Right lobe of liver (tissue), 6 donors: ENCODE measurements at regions of chr12 and their contacts with region 1.

Region 1: DNA sequence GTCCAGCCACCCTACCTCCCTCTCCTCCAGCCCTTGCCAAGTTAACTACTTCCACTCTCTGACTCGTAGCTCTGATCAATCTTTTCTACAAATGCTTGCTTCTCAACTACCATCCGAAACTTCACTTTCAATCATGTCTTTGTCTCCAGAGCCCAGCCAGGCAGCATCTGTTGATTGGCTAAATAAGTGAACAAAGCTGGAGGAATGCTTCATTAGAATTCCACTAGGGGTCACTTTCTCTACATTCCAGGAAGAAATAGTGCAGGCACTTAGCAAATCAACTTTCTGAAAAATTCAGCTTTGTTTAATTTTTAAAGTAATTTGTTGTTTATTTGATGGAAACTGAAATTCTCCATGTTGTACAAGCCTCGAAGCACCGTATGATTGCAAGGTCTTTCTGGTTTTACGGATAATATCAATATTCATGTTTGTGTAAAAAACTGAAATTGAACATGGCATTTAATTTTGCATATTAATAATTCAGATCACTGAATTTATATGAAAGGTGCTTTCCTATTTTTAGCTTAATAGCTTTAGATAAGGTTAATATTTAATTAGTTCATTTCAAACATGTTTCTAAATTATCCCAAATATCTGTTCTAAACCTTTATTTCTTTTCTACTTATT is 32.4 kb upstream of the HELB start:
- DNase-seq: no peak
- ATAC-seq: peak; percentile 70 to 85 (median 82)
- H3K4me3 ChIP-seq: no peak overlapping the region
- H3K27ac ChIP-seq: no peak overlapping the region
- H3K4me1 ChIP-seq: no peaks in the 10 kb centered on the region
- H3K27me3 ChIP-seq: no peaks in the 10 kb centered on the region
- CTCF ChIP-seq: peak; percentile 65 to 70 (median 68)
- POLR2A ChIP-seq: no peak

Region 2: DNA sequence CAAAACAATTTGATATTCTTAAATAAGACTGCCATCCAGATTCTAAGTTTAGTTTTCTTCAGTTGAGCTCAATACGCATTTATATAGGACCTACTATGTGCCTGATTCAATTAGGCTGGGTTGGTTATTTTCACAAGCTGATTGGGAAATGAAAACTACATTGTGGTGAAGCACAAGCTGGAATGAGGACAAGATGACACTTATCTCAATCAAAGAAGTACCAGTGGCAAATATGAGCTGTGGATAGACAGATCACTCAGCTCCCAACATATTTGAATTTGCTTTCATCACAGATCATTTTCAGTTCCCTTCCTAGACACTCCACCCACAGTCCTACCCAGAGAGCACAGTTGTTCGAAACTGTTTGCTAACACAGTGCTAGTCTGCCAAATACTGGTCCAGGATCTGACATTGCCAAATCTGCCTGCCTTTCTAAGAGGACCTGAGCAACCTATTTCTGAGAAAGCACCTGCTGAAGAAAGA is 214.0 kb before region 1 on chr12:
- intact Hi-C with region 1: no loop called
- DNase-seq: peak in 1 of 3 donors; percentile 55
- ATAC-seq: peak; percentile 90 to 98 (median 96)
- H3K4me3 ChIP-seq: no peak overlapping the region
- H3K27ac ChIP-seq: no peak overlapping the region
- H3K4me1 ChIP-seq: no peaks in the 10 kb centered on the region
- H3K27me3 ChIP-seq: no peaks in the 10 kb centered on the region
- CTCF ChIP-seq: no peak
- POLR2A ChIP-seq: no peak

Region 3: DNA sequence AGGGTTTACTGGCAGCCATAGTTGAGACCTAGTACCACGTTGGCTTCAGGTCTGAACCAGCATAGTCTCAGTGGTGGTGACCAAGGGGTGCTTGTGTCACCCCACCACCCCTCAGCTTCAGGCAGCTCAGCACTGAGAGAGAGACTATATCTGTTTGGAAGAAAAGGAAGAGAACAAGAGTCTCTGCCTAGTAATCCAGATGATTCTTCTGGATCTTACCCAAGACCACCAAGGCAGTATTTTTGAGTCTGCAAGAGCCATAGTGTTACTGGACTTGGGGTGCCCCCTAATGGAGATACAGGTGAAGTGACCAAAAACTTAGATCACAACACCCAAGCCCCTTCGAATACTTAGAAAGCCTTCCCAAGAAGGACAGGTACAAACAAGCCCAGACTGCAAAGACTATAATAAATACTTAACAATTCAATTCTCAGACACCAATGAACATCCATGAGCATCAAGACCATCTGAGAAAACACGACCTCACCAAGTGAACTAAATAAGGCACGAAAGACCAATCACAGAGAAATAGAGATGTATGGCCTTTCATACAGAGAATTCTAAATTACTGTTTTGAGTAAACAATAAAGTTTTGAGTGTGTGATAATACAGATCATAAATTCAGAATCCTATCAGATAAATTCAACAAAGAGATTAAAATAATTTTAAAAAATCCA is 139.5 kb after region 1 on chr12:
- intact Hi-C with region 1: loop called in 1 of 2 experiments (anchors 10 kb)
- DNase-seq: no peak
- ATAC-seq: peak; percentile 38 to 67 (median 57)
- H3K4me3 ChIP-seq: no peak overlapping the region
- H3K27ac ChIP-seq: no peak overlapping the region
- H3K4me1 ChIP-seq: no peaks in the 10 kb centered on the region
- H3K27me3 ChIP-seq: no peaks in the 10 kb centered on the region
- CTCF ChIP-seq: peak; percentile 65 to 72 (median 68)
- POLR2A ChIP-seq: no peak